ENCODE measurements at regions of chr17 and their contacts with region 1.

Region 1: DNA sequence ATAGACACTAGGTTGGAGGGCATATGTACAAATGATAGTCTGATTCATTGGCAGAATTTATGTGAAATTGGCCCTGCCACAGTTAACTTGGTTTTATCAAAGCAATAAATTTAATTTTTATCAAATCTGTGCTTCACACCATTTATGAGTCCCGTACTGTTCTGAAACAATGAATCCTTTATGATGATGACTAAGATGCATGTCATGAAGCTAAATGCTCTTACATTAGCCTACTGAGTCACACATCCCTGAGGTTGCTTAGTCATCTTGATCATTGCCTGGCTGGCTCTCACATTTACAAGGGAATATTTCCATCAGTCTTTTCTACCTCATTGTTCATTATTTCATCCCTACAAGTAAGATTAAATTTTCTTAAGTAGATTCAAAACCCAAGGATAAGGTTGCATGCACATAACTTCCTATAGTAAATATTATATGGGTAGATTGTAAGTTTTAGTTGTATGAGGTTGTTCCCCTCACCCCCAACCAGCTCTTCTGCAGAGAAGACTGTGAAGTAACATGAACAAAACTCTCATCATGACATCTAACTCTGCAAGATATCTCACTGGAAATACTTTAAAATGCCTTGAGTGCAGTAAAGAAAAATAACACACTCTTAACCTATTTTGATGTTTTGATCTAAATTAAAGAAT is 170.7 kb downstream of the CYB561 start:
- H3K4me3 Mint-ChIP-seq: no peak overlapping the region
- H3K27ac Mint-ChIP-seq: no peak overlapping the region
- H3K4me1 Mint-ChIP-seq: peaks cover 34% of the 10 kb centered on the region
- H3K27me3 Mint-ChIP-seq: no peaks in the 10 kb centered on the region

Region 2: DNA sequence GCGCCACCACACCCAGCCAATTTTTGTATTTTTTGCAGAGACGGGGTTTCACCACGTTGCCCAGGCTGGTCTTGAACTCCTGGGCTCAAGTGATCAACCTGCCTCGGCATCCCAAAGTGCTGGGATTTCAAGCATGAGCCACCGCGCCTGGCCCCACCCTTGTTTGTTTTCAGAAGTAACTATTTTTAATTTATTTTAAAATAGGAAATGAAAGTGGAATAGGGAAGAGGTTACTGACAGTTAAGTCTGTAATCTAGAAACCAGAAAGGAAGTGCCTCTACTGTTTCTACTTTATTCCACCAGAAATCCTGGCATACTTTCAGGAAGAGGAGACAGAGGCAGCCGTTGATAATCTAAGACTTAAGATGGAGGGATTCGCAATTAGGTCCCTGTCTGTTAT is 83.8 kb before region 1 on chr17:
- intact Hi-C with region 1: loop called (anchors 10 kb)
- H3K4me3 Mint-ChIP-seq: no peak overlapping the region
- H3K27ac Mint-ChIP-seq: peak overlapping the region; percentile 56
- H3K4me1 Mint-ChIP-seq: peaks cover 42% of the 10 kb centered on the region
- H3K27me3 Mint-ChIP-seq: no peaks in the 10 kb centered on the region

Region 3: DNA sequence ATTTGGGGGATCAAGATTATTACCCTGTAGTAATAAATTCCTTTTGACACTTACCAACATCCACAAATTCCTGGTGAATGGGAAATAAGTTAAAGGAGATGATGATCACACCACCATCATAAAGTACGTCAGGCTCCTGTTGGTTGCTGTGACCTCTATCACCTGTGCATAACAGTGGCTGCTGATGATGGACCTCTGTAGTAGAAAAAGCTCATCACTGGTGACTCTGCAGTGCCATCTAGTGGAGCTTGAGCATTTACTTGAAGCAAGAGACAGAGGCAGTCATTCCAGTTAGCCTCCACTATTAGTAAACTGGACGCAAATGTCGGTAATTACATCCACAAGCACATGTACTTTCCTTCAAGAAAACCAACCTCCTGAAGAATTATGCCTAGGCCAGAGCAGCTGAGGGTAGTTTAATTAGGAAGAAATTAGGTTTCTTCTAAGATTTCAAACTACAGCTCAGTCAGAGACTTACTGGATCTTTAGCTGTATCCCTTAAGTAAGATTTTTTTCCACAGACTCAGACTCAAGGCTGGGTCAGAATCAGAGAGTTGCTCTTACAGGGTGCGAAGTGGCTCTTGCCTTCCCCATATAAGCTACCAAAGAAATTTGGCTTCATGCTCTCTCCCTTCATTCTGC is 131.4 kb after region 1 on chr17:
- intact Hi-C with region 1: no loop called
- H3K4me3 Mint-ChIP-seq: no peak overlapping the region
- H3K27ac Mint-ChIP-seq: no peak overlapping the region
- H3K4me1 Mint-ChIP-seq: peaks cover 5% of the 10 kb centered on the region
- H3K27me3 Mint-ChIP-seq: no peaks in the 10 kb centered on the region

Measured in dendritic cell treated with granulocyte-macrophage colony-stimulating factor and Interleukin-4, amounts not matched to agents 40 ng/mL and 50 ng/mL, for 4 days (primary cell).